ACHN (cell line): ENCODE measurements at regions of chr15 and their contacts with region 1.

Region 1: GRCh38 chr15:92077353-92078085 is 224.0 kb downstream of the SLCO3A1 start:
- DNase-seq: peak; percentile 74

Region 2: GRCh38 chr15:91852741-91853510 is 224.6 kb before region 1 on chr15:
- in situ Hi-C with region 1: loop called (anchors 25 kb)
- DNase-seq: peak; percentile 71